Naive thymus-derived CD4-positive, alpha-beta T cell (primary cell): ENCODE measurements at regions of chrX and their contacts with region 1.

Region 1: GRCh38 chrX:78283511-78283910 is 43.9 kb downstream of the CYSLTR1 start:
- DNase-seq: no peak
- ATAC-seq: no peak
- H3K4me3 ChIP-seq: no peak overlapping the region
- H3K4me3 Mint-ChIP-seq: no peak overlapping the region
- H3K27ac ChIP-seq: no peak overlapping the region
- H3K27ac Mint-ChIP-seq: peak overlapping the region in 1 of 9 donors; percentile 45
- H3K4me1 ChIP-seq: no peaks in the 10 kb centered on the region
- H3K4me1 Mint-ChIP-seq: peaks cover 0 to 6% (median 0%) of the 10 kb centered on the region in 7 donors
- H3K27me3 ChIP-seq: no peaks in the 10 kb centered on the region
- H3K27me3 Mint-ChIP-seq: no peaks in the 10 kb centered on the region

Region 2: GRCh38 chrX:78321809-78322208 is 38.3 kb after region 1 on chrX:
- CTCF ChIA-PET with region 1: no interaction called
- POLR2A ChIA-PET with region 1: no interaction called
- intact Hi-C with region 1: loop called (anchors 5 to 10 kb)
- DNase-seq: peak in 7 of 9 donors; percentile 57 to 80 (median 72)
- ATAC-seq: peak; percentile 91
- H3K4me3 ChIP-seq: no peak overlapping the region
- H3K4me3 Mint-ChIP-seq: peak overlapping the region; percentile 66 to 95 (median 75)
- H3K27ac ChIP-seq: peak overlapping the region; percentile 55
- H3K27ac Mint-ChIP-seq: peak overlapping the region; percentile 80 to 99 (median 91)
- H3K4me1 ChIP-seq: peaks cover 16 to 23% of the 10 kb centered on the region in 2 donors
- H3K4me1 Mint-ChIP-seq: peaks cover 16 to 57% (median 45%) of the 10 kb centered on the region in 7 donors
- H3K27me3 ChIP-seq: no peaks in the 10 kb centered on the region
- H3K27me3 Mint-ChIP-seq: no peaks in the 10 kb centered on the region

Region 3: GRCh38 chrX:78624962-78625909 is 341.7 kb after region 1 on chrX:
- CTCF ChIA-PET with region 1: no interaction called
- POLR2A ChIA-PET with region 1: no interaction called
- intact Hi-C with region 1: no loop called
- DNase-seq: no peak
- ATAC-seq: no peak
- H3K4me3 ChIP-seq: no peak overlapping the region
- H3K4me3 Mint-ChIP-seq: peak overlapping the region in 1 of 10 donors; percentile 37
- H3K27ac ChIP-seq: no peak overlapping the region
- H3K27ac Mint-ChIP-seq: no peak overlapping the region
- H3K4me1 ChIP-seq: peaks cover 0 to 3% of the 10 kb centered on the region in 2 donors
- H3K4me1 Mint-ChIP-seq: peaks cover 0 to 15% (median 7%) of the 10 kb centered on the region in 7 donors
- H3K27me3 ChIP-seq: no peaks in the 10 kb centered on the region
- H3K27me3 Mint-ChIP-seq: no peaks in the 10 kb centered on the region